Psoas muscle (tissue), 8 donors: ENCODE measurements at regions of chr11 and their contacts with region 1.

Region 1: DNA sequence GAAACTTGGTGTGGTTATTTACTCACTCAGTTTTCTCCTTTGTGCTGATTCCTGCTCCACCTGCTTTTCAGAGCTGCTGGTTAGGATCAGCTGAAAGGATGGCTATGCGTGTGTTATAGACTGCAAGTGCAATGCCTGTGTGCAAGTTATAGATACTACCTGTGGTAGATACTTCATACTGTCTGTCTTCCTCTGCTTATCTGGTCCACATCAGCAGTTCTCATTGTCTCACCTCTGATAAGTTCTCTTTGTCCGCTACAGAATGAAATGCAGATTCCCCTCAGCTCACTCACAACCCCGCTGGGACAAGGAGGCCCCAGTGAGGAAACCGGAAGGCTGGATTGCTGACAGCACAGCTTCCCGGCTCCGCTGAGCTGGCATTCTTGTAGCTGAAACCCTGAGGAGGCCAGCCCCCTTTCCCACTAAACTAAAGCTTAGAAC is 37.5 kb upstream of the LYVE1 start:
- DNase-seq: peak; percentile 50 to 68
- ATAC-seq: peak in 1 of 4 donors; percentile 18
- H3K4me3 ChIP-seq: no peak overlapping the region
- H3K27ac ChIP-seq: peak overlapping the region; percentile 43
- H3K4me1 ChIP-seq: peaks cover 31% of the 10 kb centered on the region
- H3K27me3 ChIP-seq: no peaks in the 10 kb centered on the region
- CTCF ChIP-seq: no peak

Region 2: GRCh38 chr11:10550503-10551289 is 55.3 kb before region 1 on chr11:
- intact Hi-C with region 1: no loop called
- DNase-seq: no peak
- ATAC-seq: no peak
- H3K4me3 ChIP-seq: no peak overlapping the region
- H3K27ac ChIP-seq: no peak overlapping the region
- H3K4me1 ChIP-seq: no peaks in the 10 kb centered on the region
- H3K27me3 ChIP-seq: no peaks in the 10 kb centered on the region
- CTCF ChIP-seq: no peak

Region 3: GRCh38 chr11:10564696-10565318 is 41.2 kb before region 1 on chr11:
- intact Hi-C with region 1: loop called in 1 of 2 experiments (anchors 2 kb)
- DNase-seq: no peak
- ATAC-seq: peak in 1 of 4 donors; percentile 45
- H3K4me3 ChIP-seq: peak overlapping the region; percentile 26
- H3K27ac ChIP-seq: no peak overlapping the region
- H3K4me1 ChIP-seq: peaks cover 6% of the 10 kb centered on the region
- H3K27me3 ChIP-seq: no peaks in the 10 kb centered on the region
- CTCF ChIP-seq: peak; percentile 48

Region 4: GRCh38 chr11:10641177-10641911 is 35.4 kb after region 1 on chr11:
- intact Hi-C with region 1: loop called in 1 of 2 experiments (anchors 5 kb)
- DNase-seq: no peak
- ATAC-seq: no peak
- H3K4me3 ChIP-seq: no peak overlapping the region
- H3K27ac ChIP-seq: no peak overlapping the region
- H3K4me1 ChIP-seq: no peaks in the 10 kb centered on the region
- H3K27me3 ChIP-seq: no peaks in the 10 kb centered on the region
- CTCF ChIP-seq: no peak

Region 5: DNA sequence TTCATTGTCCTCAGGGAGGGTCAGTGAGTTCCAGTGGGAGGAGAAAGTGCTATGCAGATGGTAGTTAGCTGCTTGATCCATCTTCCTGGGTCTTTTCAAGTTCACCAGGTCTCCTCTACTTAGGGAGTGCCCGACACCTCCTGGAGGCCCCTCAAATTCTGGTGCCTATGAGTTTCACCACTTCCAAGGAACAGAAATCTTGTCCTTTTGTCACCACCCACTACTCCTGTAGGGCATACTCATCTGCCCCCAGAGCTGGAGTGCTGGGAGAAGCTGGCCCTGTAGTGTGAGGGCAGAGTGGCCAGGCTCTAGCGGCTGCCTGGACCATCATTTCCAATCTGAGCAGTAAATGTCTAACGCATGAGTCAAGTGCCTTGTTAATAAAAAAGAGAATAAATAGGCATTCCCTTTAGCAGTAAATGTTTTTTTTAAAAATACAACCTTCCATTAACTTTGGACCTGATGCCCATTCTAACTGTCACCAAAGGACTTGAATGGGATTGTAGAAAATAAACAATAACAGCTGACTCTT is 75.1 kb after region 1 on chr11:
- intact Hi-C with region 1: no loop called
- DNase-seq: no peak
- ATAC-seq: no peak
- H3K4me3 ChIP-seq: no peak overlapping the region
- H3K27ac ChIP-seq: no peak overlapping the region
- H3K4me1 ChIP-seq: peaks cover 3% of the 10 kb centered on the region
- H3K27me3 ChIP-seq: no peaks in the 10 kb centered on the region
- CTCF ChIP-seq: no peak

Region 6: DNA sequence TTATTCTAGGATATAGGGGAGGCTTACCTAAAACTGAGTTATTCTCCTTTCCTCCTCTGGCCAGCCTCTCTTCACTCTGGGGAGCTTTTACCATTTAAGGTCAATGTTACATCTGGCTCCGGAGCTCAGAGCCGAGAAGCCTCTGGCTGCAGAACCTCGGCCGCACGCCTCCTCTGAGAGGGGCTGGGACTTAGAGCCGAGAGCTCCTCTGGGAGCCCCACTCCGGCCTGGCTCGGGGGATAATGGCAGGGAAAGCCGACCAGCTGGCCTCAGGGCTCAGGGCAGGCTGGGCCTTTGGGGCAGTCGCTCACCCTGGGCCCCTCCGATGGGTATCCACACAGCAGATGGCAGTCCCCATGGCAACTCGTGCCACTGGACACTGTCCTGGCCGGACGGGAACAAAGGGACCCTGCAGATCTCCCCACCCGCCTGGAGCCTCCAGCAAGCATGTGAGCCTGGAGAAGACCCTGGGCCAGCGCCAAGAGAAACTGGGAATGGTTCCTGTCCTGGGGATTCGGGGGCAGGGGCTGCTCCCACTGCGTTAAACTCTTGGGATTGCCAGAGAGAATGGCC is 87.6 kb after region 1 on chr11 and contains the start of gene IRAG1:
- intact Hi-C with region 1: no loop called
- DNase-seq: peak; percentile 40 to 69
- ATAC-seq: peak; percentile 34 to 67 (median 54)
- H3K4me3 ChIP-seq: peak within 1 kb of the TSS; percentile 55
- H3K27ac ChIP-seq: peak within 1 kb of the TSS; percentile 41
- H3K4me1 ChIP-seq: no peaks in the 10 kb centered on the region
- H3K27me3 ChIP-seq: no peaks in the 10 kb centered on the region
- CTCF ChIP-seq: no peak
- total RNA-seq, gene IRAG1: 3.9 to 9.4 (median 4.4) TPM